Stomach (tissue), 19 donors: ENCODE measurements at regions of chr5 and their contacts with region 1.

Region 1: GRCh38 chr5:159987031-159987674 is 21.8 kb upstream of the TTC1 start:
- DNase-seq: peak; percentile 92 to 95
- H3K4me3 ChIP-seq: peak overlapping the region; percentile 47 to 59 (median 52)
- H3K27ac ChIP-seq: peak overlapping the region; percentile 37 to 80 (median 55)
- H3K4me1 ChIP-seq: peaks cover 0 to 13% (median 9%) of the 10 kb centered on the region in 4 donors
- H3K27me3 ChIP-seq: peaks cover 0 to 40% (median 0%) of the 10 kb centered on the region in 3 donors
- CTCF ChIP-seq: peak in 5 of 7 experiments; percentile 52 to 73 (median 60)
- EP300 ChIP-seq: no peak
- POLR2A ChIP-seq: no peak

Region 2: GRCh38 chr5:159444441-159445082 is 542.6 kb before region 1 on chr5:
- intact Hi-C with region 1: loop called (anchors 10 kb)
- DNase-seq: peak in 1 of 2 donors; percentile 68
- H3K4me3 ChIP-seq: no peak overlapping the region
- H3K27ac ChIP-seq: no peak overlapping the region
- H3K4me1 ChIP-seq: no peaks in the 10 kb centered on the region
- H3K27me3 ChIP-seq: no peaks in the 10 kb centered on the region
- CTCF ChIP-seq: peak in 3 of 7 experiments; percentile 19 to 53 (median 31)
- EP300 ChIP-seq: no peak
- POLR2A ChIP-seq: no peak

Region 3: GRCh38 chr5:159515909-159516415 is 471.2 kb before region 1 on chr5:
- intact Hi-C with region 1: loop called (anchors 10 kb)
- DNase-seq: peak; percentile 73 to 74
- H3K4me3 ChIP-seq: no peak overlapping the region
- H3K27ac ChIP-seq: no peak overlapping the region
- H3K4me1 ChIP-seq: peaks cover 0 to 14% (median 6%) of the 10 kb centered on the region in 4 donors
- H3K27me3 ChIP-seq: peaks cover 0 to 4% (median 0%) of the 10 kb centered on the region in 3 donors
- CTCF ChIP-seq: peak in 5 of 7 experiments; percentile 58 to 79 (median 70)
- EP300 ChIP-seq: no peak
- POLR2A ChIP-seq: no peak